Activated B cell treated with CpG ODN at 0.5 μM for 24 hours (primary cell): ENCODE measurements at regions of chr6 and their contacts with region 1.

Region 1: GRCh38 chr6:56902641-56903464 is 52.1 kb upstream of the BEND6 start:
- DNase-seq: no peak
- ATAC-seq: no peak
- H3K4me3 Mint-ChIP-seq: no peak overlapping the region
- H3K27ac Mint-ChIP-seq: no peak overlapping the region
- H3K4me1 Mint-ChIP-seq: no peaks in the 10 kb centered on the region
- H3K27me3 Mint-ChIP-seq: peaks cover 6% of the 10 kb centered on the region
- CTCF ChIP-seq: peak; percentile 7

Region 2: GRCh38 chr6:55825402-55826051 is 1077.3 kb before region 1 on chr6:
- CTCF ChIA-PET with region 1: no interaction called
- POLR2A ChIA-PET with region 1: no interaction called
- intact Hi-C with region 1: no loop called
- DNase-seq: no peak
- ATAC-seq: no peak
- H3K4me3 Mint-ChIP-seq: no peak overlapping the region
- H3K27ac Mint-ChIP-seq: no peak overlapping the region
- H3K4me1 Mint-ChIP-seq: no peaks in the 10 kb centered on the region
- H3K27me3 Mint-ChIP-seq: no peaks in the 10 kb centered on the region
- CTCF ChIP-seq: no peak

Region 3: DNA sequence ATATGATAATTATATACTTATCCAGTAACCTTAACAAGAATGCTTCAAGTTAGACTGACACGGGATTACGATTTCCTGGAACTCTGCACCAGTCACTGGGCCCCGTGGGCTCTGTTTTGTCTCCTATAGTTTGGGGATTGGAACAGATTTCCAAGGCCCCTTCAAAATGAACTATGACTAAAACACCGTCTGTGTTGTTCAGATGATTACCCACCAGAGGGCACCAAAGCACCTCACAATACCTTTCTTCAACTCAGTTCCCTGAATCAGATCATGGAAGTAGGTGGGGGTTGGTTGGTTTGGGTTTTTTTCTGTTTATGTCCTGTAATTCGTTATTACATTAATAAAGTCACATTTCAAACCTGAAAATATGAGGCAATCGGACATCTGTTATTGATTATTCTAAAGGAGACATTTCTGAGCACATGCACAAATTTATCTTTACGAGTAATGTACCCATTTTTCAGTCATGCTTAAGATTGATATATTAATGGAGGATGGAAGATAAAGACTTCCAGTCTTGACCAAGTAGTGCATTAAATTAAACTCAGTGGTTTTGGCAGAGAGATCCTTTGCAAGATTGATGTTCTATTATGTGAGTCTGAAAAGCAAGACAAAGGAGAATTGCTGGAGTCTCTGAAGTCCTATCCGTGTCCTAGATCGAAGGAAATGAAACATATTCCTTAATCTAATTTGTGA is 543.5 kb before region 1 on chr6:
- CTCF ChIA-PET with region 1: no interaction called
- POLR2A ChIA-PET with region 1: no interaction called
- intact Hi-C with region 1: loop called (anchors 5 kb)
- DNase-seq: no peak
- ATAC-seq: peak; percentile 85
- H3K4me3 Mint-ChIP-seq: no peak overlapping the region
- H3K27ac Mint-ChIP-seq: no peak overlapping the region
- H3K4me1 Mint-ChIP-seq: no peaks in the 10 kb centered on the region
- H3K27me3 Mint-ChIP-seq: no peaks in the 10 kb centered on the region
- CTCF ChIP-seq: peak; percentile 85

Region 4: DNA sequence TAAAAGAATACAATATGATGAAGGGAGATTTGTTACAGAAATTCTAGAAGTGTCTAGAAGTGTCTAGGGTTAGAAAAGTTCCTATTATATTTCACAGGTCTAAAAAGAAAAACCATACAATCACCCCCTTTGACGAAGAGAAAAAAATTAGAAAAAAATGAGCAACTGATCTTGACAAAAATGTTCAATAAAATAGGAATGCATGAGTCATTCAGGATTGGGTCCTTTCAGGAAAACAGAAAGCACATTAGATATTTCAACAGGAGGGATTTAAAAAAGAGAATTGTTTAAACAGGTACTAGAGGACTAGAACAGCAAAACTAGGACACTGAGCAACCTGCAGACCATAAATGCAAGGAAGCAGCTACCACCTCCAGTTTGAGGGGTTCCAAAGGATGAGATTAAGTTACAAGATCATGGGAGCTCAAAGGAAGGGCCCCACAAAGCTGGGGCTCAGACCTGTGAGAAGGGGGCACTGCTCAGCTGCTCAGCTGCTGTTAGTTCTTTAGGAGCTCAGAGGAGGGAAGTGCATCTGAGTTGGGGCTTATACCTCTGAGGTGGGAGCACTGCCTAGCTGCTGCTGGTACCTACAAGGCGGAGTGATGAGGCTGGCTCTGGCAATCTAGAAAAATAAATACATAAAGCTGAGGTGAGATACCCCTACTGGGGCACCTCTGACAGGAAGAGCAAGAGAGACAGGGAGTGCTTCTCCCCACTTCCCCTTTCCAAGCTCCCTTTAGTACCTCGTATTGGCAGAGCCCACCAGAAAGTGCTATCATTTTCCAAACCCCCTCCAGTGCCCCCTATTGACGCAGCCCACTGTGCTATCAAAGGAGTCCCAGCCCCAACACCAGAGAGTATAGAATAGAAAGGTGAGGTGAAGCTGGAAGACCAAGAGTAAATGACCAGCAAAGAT is 24.9 kb after region 1 on chr6:
- CTCF ChIA-PET with region 1: no interaction called
- POLR2A ChIA-PET with region 1: no interaction called
- intact Hi-C with region 1: no loop called
- DNase-seq: no peak
- ATAC-seq: no peak
- H3K4me3 Mint-ChIP-seq: no peak overlapping the region
- H3K27ac Mint-ChIP-seq: no peak overlapping the region
- H3K4me1 Mint-ChIP-seq: no peaks in the 10 kb centered on the region
- H3K27me3 Mint-ChIP-seq: peaks cover 6% of the 10 kb centered on the region
- CTCF ChIP-seq: no peak

Region 5: DNA sequence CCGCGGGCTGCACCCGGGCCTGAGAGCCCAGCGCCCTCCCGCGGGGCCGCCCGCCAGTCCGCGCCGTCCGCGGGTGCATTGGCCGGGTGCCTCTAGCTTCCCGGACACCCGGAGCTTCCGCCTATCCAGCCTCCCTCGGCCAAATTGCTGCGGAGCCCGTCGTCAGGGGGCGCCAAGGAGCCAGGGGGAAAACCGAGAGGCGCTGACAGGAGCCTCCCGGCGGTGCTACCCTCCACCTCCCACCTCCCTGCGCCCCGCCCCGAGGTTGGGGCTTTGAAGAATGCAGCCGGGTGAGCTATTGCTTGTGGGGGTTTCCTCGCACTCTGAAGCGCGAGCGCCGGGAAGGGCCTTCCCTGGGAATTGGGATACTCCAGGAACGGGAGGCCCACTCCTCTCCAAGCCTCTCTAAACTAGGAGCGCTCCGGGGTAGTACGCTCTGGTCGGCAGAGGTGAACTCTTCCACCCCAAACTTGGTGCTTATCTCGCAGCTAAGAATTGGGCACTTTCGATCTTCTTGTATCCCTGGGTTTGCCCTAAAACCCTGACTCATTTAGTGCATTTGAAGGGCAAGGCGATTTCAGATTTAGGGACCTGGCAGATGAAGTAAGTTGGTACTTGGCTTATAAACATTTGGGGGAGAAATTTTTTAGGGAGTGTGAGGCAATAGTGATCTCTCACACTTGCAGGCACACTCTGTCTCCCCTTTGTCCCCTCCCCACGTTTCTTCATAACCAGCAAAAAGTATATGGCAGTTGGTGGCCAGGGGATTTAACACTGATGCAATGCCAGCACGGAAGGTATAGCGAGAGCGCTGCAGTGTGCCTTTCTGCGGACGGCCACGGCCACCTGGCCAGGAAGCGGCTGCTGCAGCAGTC is 52.6 kb after region 1 on chr6:
- CTCF ChIA-PET with region 1: no interaction called
- POLR2A ChIA-PET with region 1: no interaction called
- intact Hi-C with region 1: loop called (anchors 2 kb)
- DNase-seq: peak; percentile 30
- ATAC-seq: peak; percentile 47
- H3K4me3 Mint-ChIP-seq: peak overlapping the region; percentile 71
- H3K27ac Mint-ChIP-seq: no peak overlapping the region
- H3K4me1 Mint-ChIP-seq: peaks cover 25% of the 10 kb centered on the region
- H3K27me3 Mint-ChIP-seq: peaks cover 59% of the 10 kb centered on the region
- CTCF ChIP-seq: no peak

Region 6: GRCh38 chr6:57108691-57109090 is 205.8 kb after region 1 on chr6:
- CTCF ChIA-PET with region 1: no interaction called
- POLR2A ChIA-PET with region 1: no interaction called
- intact Hi-C with region 1: loop called (anchors 10 kb)
- DNase-seq: no peak
- ATAC-seq: peak; percentile 86
- H3K4me3 Mint-ChIP-seq: peak overlapping the region; percentile 16
- H3K27ac Mint-ChIP-seq: peak overlapping the region; percentile 59
- H3K4me1 Mint-ChIP-seq: peaks cover 43% of the 10 kb centered on the region
- H3K27me3 Mint-ChIP-seq: no peaks in the 10 kb centered on the region
- CTCF ChIP-seq: no peak

Region 7: DNA sequence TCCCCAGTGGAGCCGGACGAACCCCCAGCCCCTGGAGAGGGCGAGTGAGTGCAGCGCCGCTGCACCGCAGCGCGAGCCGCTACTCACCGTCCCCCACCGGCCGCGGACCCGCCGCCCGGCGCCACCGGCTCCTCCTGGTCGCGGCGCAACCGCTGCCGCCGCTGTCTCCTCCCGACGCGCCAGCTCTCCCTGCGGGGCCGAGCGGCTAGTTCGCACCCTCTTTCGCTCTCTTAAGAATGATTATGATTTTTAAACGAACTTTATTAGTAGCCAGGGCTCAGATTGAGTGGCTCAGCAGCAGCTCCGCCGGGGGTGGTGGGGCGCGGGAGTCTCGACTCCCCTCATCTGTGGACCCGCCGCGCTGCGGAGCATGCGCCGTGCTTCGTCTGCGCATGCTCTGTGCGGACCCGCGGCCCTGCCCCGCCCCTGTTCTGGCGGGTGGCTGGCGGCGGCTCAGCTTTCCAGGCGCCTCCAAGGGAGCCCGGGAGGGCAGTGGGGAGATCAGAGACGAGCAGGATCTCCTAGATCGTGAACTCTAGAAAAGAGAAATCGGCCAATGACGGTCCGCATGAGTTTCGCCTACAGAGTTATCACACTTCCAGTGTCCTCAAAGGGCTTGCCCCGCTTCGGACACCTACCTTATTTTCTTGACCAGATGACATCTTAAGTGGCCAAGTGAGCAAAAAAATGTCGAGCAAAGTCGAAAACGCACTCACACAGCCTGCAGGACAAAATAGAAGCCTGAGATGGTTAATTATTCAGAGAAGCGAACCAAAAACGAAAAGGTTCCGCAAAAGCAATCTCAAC is 319.3 kb after region 1 on chr6 and contains the start of gene RAB23:
- CTCF ChIA-PET with region 1: interaction called, 3 read pairs
- POLR2A ChIA-PET with region 1: no interaction called
- intact Hi-C with region 1: loop called (anchors 2 kb)
- DNase-seq: peak; percentile 91
- ATAC-seq: peak; percentile 89
- H3K4me3 Mint-ChIP-seq: peak within 1 kb of the TSS; percentile 99
- H3K27ac Mint-ChIP-seq: peak within 1 kb of the TSS; percentile 91
- H3K4me1 Mint-ChIP-seq: peaks cover 11% of the 10 kb centered on the region
- H3K27me3 Mint-ChIP-seq: peaks cover 9% of the 10 kb centered on the region
- CTCF ChIP-seq: no peak
- total RNA-seq, gene RAB23: 0.32 and 0.49 TPM in 2 replicates